ENCODE measurements at regions of chr11 and their contacts with region 1.

Region 1: DNA sequence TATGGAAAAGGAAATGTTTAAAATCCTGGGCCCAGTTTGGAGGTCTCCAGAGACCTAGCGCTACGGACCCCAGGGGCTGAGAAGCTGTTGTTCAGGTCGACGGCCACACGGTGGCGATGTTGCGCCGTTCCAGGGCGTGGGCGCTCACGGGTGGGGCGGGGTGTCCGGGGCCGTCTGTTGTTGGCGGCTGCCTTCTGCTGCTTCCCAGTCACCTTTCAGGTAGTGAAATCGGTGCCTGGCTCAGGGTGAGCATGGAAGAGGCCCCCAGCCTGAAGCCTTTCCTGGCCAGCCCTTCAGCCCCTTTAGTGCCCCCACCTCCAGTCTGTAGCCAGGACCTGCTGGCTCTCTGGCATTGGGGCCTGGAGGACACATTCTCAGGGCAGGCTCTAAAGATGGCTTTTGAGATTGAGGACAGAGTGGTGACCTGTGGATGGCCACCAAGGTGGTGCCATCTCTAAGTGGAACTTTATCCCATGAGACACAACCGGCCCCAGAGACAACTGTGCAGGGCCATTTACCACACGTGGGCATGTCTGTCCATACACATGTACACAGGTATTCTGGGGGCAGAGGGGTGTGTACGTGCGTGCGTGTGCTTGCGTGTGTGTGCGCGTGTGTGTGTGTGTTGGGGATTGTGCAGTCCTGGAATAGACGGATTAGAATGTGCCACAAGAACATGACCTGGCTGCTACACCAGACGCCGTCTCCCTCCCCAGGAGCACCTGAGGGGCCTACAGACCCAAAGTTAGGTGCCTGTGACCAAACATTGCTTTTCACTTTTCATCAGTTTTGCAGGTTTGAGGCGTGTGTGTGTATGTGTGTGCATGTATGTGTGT is 53.8 kb downstream of the ST14 start:
- DNase-seq: peak; percentile 76 to 88 (median 86)
- ATAC-seq: peak; percentile 93
- H3K4me3 ChIP-seq: no peak overlapping the region
- H3K27ac ChIP-seq: no peak overlapping the region
- H3K4me1 ChIP-seq: peaks cover 0 to 16% of the 10 kb centered on the region in 2 experiments; a peak in 1 of 5 replicates
- H3K27me3 ChIP-seq: peaks cover 31 to 90% of the 10 kb centered on the region in 2 experiments; a peak in 4 of 5 replicates
- CTCF ChIP-seq: peak; percentile 89 to 93 (median 92)
- EP300 ChIP-seq: no peak
- POLR2A ChIP-seq: no peak
- RAD21 ChIP-seq: peak; percentile 86 to 95

Region 2: DNA sequence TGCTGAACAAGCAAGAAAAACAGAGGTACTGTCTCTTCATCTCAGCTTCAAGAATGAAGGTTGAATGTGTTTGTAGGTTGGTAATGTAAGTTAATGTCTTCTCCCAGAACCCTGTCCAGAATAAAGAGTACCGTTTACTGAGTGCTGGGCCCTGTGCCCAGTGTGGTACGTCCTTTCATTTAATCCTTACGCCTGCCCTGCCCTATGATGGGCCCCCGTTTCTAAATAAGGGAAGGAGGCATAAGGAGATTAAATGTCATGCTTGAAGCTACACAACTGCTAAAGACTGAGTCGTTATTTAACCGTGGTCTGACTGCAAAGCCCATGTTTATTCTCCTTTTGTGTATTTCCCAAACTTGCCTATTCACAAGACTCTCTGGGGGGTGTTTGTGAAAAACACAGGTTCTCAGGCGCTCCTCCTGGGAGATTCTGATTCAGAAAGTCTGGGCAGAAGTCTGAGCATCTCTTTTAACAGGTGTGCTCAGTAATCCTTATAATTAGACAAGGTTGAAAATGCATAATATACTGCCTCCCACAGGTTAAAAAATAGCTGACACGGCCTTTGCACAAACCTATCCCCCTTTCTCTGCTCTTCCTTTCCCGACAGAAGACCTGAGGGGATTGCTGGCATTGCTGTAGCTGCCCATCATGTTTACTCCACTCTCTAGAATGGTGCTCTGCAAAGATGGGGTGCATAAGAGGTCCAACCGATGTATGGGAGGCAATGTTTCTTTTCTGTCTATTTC is 157.7 kb after region 1 on chr11:
- CTCF ChIA-PET with region 1: interaction called, 3 read pairs
- POLR2A ChIA-PET with region 1: no interaction called
- in situ Hi-C with region 1: no loop called
- intact Hi-C with region 1: loop called (anchors 1 kb)
- DNase-seq: peak in 2 of 4 experiments; percentile 6 to 15
- ATAC-seq: peak; percentile 81
- H3K4me3 ChIP-seq: no peak overlapping the region
- H3K27ac ChIP-seq: no peak overlapping the region
- H3K4me1 ChIP-seq: 0 out of 5 replicates have a peak, but pooled peaks cover 0 to 2% of the 10 kb centered on the region in 2 experiments
- H3K27me3 ChIP-seq: peaks cover 23 to 30% of the 10 kb centered on the region in 2 experiments; a peak in 4 of 5 replicates
- CTCF ChIP-seq: peak in 2 of 3 experiments; percentile 34 to 45; a peak in 3 of 6 replicates
- EP300 ChIP-seq: no peak
- POLR2A ChIP-seq: no peak
- RAD21 ChIP-seq: peak in 1 of 2 experiments; percentile 42; a peak in 2 of 4 replicates

Region 3: DNA sequence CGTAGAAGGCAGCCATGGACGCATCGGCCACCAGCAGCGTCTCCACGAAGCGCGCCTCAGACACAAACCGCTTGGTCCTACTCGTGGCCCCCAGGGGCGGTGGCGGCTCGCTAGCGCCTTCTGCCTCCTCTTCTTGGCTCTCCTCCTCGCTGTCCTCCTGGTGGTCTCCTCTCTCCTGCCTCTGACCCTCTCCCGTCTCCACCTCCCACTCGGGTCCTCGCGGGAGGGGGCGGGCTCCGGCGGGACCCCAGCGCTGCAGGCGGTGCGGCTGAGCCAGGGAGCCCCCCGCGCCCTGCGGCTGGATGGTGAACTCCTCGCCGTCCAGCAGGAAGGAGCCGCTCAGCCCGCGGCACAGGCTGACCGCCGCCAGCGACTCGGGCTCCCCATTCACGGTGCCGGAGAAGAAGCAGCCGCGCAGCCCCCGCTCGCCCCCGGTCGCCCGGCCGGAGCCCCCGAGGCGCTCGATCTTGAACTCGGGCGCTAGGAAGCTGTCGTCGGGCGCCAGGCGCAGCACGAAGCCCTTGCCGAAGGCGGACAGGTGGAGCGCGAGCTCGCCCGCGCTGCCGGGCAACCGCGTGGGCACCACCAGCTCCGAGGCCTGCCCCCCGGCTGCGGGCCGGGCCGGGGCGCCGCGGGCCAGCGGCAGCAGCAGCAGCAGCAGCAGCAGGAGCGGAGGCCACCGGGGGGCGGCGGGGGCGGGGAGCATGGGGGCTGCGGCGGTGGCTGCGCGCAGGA is 214.4 kb after region 1 on chr11:
- CTCF ChIA-PET with region 1: no interaction called
- POLR2A ChIA-PET with region 1: no interaction called
- in situ Hi-C with region 1: loop called (anchors 10 kb)
- intact Hi-C with region 1: loop called (anchors 1 kb)
- DNase-seq: no peak
- ATAC-seq: no peak
- H3K4me3 ChIP-seq: no peak overlapping the region
- H3K27ac ChIP-seq: no peak overlapping the region
- H3K4me1 ChIP-seq: peaks cover 0 to 8% of the 10 kb centered on the region in 2 experiments; a peak in 2 of 5 replicates
- H3K27me3 ChIP-seq: peaks cover 37 to 65% of the 10 kb centered on the region in 2 experiments
- CTCF ChIP-seq: peak in 1 of 3 experiments; percentile 8; a peak in 1 of 6 replicates
- EP300 ChIP-seq: no peak
- POLR2A ChIP-seq: no peak
- RAD21 ChIP-seq: no peak

Region 4: DNA sequence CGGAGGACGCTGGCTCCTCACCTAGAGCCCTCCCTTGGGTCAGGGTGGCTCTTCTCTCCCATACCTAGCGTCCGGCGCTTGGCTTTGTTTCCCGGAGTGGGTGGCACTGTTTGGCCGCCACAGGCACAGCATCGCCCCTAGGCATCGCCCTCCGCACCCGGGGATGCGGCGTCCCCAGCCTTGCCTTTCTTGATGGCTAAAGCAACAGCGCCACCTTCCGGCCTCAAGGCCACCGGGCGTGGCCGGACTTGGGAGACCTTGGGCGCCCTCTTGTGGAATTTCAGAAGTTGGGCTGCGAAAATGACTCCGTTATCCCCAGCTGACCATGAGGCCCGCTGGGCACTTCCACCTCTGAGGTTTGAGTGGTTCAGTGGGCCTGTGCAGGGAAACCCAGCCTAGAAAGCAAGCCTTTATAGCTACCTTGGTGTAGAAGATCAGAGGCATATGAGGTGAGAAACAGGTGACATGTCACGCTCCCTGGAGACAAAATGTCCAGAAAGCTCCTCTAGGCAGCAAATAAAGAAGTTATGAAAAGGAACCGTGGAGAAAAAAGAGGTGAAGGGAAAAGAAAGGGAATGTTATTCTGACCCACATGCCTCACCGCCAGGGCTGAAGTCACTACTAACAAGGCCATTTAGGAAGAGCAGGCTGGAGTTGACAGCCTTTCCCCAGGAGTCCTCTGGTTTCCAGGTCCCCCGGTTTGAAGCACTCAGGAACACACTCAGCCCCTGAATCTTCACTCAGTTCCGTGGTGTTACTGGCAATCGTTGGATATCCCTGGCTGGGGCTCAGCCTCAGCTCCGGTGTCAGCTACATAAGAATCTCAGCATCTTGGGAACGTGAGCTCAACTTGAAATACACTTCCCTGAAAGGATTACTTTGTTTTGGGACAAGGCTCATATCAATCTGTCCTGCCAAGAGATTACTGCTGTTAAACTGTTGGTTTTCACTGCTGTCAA is 648.8 kb after region 1 on chr11:
- CTCF ChIA-PET with region 1: interaction called, 23 read pairs
- POLR2A ChIA-PET with region 1: no interaction called
- in situ Hi-C with region 1: loop called (anchors 5 kb)
- intact Hi-C with region 1: loop called (anchors 2 kb)
- DNase-seq: peak; percentile 81 to 94 (median 87)
- ATAC-seq: peak; percentile 94
- H3K4me3 ChIP-seq: no peak overlapping the region
- H3K27ac ChIP-seq: no peak overlapping the region
- H3K4me1 ChIP-seq: peaks cover 0 to 3% of the 10 kb centered on the region in 2 experiments; a peak in 1 of 5 replicates
- H3K27me3 ChIP-seq: peaks cover 8 to 20% of the 10 kb centered on the region in 2 experiments
- CTCF ChIP-seq: peak; percentile 100
- EP300 ChIP-seq: no peak
- POLR2A ChIP-seq: no peak
- RAD21 ChIP-seq: peak; percentile 96 to 99

Measured in K562 (cell line).